PC-9 (cell line): ENCODE measurements at regions of chr20 and their contacts with region 1.

Region 1: DNA sequence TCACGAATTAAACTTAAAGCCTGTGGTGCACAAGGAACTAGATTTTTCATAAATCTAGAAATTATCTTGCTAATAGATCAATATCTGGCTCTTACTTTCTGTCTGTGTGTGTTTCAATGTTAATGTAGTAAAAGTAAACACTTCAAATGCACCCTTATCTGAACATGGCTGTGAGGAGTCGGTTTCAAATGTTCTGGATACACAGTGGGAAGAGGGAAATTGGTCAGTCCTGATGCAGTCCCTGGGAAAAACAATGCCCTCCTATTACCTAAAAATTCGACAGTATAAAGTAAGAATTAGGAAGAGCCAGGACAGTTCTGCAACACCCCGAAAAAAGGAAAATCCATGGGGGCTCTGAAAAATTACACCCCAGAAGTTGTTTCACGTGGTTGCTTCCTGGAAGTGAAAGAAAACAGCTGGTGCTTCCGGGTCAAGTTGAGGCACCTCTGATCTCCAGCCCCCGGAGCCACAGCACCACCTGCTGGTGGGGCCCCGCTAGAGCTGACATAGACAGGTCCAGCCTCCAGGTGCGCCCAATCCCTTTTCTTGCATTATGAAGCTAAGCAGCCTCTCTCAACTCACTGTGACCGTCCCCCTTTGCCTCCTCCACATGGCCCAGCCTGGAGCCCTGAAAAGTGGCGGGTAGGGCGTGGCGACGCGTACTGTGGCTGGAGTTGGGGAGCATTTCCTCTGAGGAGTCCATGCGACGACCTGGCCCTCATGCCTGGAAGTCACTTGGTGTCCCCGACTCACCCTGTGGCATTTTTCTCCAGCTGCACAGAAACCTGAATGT is 8.3 kb downstream of the SEMG2 start:
- DNase-seq: peak; percentile 66 to 69
- H3K4me3 ChIP-seq: peak overlapping the region; percentile 25; the same call in 1 of the 2 replicates
- H3K27ac ChIP-seq: no peak overlapping the region
- H3K4me1 ChIP-seq: peaks cover 6% of the 10 kb centered on the region
- H3K27me3 ChIP-seq: no peaks in the 10 kb centered on the region
- CTCF ChIP-seq: peak; percentile 96

Region 2: DNA sequence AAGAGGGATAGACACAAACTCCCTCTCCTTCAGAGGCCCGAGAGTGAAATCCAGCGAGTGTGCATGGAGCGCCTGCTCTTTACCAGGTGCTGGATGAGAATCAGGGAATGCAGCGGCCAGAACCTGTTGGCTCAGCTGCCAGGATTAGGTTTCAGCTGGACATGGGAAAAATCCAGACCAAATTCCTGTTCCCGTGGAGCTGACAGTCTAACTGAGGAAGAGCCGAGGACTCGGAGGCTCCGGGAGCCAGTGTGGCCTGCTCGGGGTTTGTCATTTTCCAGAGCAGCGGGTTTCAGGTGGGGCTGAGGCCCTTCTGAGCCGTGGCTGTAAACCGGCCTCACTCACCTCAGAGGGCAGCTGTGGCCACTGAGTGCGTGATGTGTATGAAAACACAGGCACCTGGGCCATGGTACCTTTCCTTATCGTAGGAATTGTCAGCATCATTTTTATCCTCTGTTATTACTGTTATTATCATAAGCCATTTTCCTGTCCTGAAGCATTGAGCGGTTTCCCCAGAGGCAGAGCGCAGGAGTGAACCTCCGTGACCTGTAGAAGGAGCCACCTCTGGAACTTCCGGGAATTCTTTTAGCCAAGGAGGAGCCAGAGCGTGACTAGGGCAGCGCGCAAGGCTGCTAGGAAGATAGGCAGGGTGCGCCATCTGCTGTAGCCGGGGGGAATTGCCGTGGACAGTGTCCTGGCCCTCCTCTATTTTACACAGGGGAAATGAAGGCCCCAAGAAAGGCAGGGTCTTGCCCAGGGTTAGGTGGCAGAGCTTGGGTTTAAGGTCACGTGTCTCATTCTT is 619.7 kb before region 1 on chr20:
- CTCF ChIA-PET with region 1: no interaction called
- POLR2A ChIA-PET with region 1: no interaction called
- intact Hi-C with region 1: no loop called
- DNase-seq: peak; percentile 85 to 91
- H3K4me3 ChIP-seq: no peak overlapping the region
- H3K27ac ChIP-seq: 0 out of 2 replicates have a peak overlapping the region, but pooled peaks have one; percentile 0
- H3K4me1 ChIP-seq: peaks cover 7% of the 10 kb centered on the region
- H3K27me3 ChIP-seq: no peaks in the 10 kb centered on the region
- CTCF ChIP-seq: peak; percentile 99

Region 3: DNA sequence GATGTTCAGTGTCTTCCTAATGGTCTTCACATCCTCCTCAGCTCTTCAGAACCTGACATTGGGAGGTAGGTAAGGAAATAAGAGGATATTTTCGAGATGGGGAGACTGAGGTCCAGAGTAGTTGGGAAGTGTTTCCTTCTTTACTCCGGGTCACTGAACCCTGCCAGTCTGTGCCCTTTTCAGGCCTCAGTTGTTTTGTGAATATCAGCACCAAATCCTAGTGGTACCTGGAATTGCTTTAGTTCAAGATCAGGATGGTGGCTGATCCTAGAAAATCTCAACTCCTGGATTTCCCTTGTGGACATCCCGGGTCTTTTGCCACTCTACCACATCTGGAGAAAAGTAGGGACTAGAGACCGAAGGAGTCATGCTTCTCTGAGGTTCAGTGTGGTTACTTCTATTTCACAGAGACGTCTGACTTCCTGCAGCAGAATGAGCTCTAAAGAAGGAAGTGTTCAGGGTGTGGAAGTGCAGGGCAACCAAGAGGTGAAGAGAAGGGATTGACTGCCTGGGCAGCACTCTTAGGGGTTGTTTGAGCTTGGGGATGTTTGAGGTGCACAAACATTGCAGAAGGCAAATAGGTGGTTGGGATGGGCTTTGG is 262.2 kb before region 1 on chr20:
- CTCF ChIA-PET with region 1: interaction called, 15 read pairs
- POLR2A ChIA-PET with region 1: no interaction called
- intact Hi-C with region 1: no loop called
- DNase-seq: peak in 1 of 2 experiments; percentile 44
- H3K4me3 ChIP-seq: peak overlapping the region; percentile 76
- H3K27ac ChIP-seq: no peak overlapping the region
- H3K4me1 ChIP-seq: peaks cover 34% of the 10 kb centered on the region
- H3K27me3 ChIP-seq: no peaks in the 10 kb centered on the region
- CTCF ChIP-seq: no peak

Region 4: DNA sequence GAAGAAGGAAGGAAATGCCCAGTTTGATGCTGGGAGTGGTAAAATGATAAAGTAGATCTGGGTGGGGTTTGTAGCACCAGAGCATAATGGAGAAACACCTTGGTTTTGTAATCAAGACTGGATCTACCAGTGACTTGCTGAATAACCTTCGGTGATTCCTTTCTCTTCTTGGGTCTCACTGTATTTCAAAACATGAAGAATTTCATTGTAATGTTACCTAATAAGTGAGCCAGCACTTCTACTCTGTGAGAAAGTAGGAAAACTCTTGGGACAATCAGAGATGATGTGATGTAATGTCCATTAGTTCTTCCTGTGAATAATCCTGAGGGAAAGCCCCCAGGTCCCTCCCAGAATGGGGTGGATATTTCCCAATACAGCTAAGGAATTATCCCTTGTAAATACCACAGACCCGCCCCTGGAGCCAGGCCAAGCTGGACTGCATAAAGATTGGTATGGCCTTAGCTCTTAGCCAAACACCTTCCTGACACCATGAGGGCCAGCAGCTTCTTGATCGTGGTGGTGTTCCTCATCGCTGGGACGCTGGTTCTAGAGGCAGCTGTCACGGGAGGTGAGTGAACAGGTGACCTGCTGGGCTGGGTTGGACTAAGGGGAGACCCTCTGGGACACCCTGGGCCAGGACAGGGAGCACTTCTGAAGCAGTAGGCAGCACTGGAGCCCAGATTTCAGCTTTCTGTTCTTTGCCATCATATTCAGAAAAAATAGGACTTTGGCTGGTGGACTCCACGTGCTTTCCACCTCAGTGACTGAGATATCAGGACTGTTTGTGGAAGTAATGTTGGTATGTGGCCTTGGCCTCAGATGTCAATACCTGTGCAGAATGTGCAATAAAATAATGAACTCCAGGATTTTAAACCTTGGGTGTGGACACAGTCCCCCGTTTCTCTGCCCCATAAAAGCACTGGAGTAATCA is 54.8 kb before region 1 on chr20 and contains the start of gene PI3:
- CTCF ChIA-PET with region 1: no interaction called
- POLR2A ChIA-PET with region 1: interaction called, 14 read pairs
- intact Hi-C with region 1: no loop called
- DNase-seq: peak; percentile 82 to 100
- H3K4me3 ChIP-seq: peak within 1 kb of the TSS; percentile 54
- H3K27ac ChIP-seq: peak within 1 kb of the TSS; percentile 96
- H3K4me1 ChIP-seq: peaks cover 48% of the 10 kb centered on the region
- H3K27me3 ChIP-seq: no peaks in the 10 kb centered on the region
- CTCF ChIP-seq: no peak
- total RNA-seq, gene PI3: 4.6 and 6.6 TPM in 2 replicates

Region 5: GRCh38 chr20:45253260-45253659 is 23.8 kb after region 1 on chr20:
- CTCF ChIA-PET with region 1: no interaction called
- POLR2A ChIA-PET with region 1: no interaction called
- intact Hi-C with region 1: no loop called
- DNase-seq: peak; percentile 63 to 88
- H3K4me3 ChIP-seq: peak overlapping the region; percentile 73
- H3K27ac ChIP-seq: peak overlapping the region; percentile 97
- H3K4me1 ChIP-seq: peaks cover 84% of the 10 kb centered on the region
- H3K27me3 ChIP-seq: no peaks in the 10 kb centered on the region
- CTCF ChIP-seq: no peak

Region 6: DNA sequence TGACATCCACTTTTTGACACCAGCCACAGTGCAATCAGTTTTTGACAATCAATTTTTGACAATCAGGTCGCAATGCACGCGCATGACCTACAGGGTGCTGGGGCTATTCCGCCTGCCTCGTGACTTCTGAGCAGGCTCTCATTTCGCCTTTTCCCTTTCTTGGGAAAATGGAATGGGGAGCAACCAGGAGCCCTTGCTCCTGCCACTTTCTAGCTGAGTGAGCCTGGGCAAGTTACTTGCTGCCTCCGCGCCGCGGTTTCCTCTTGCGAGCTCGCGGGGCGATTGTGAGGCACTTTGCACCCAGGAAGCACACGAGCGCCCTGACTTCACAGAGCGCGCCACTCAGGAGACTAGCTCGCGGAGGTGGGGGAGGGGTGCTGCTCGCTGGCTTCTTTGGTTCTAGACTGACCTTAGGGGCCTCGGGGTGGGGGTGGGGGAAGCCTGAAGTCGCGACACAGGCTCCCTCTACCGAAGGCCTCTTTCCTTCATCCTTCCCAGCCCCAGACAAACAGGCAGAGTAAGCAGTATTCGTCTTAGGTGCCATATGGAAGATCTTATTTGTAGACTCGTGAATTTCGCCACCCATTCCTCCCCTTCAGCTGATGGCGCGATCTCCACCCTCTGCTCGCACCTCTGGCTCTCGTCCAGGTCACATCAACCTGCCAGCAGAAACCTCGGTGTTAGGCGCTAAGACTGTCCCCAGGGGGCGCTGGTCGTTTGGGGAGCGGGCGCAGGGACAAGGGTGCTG is 144.1 kb after region 1 on chr20:
- CTCF ChIA-PET with region 1: interaction called, 10 read pairs
- POLR2A ChIA-PET with region 1: no interaction called
- intact Hi-C with region 1: no loop called
- DNase-seq: peak; percentile 57 to 87
- H3K4me3 ChIP-seq: no peak overlapping the region
- H3K27ac ChIP-seq: no peak overlapping the region
- H3K4me1 ChIP-seq: no peaks in the 10 kb centered on the region
- H3K27me3 ChIP-seq: no peaks in the 10 kb centered on the region
- CTCF ChIP-seq: peak; percentile 76